MCF 10A (cell line): ENCODE measurements at regions of chr4 and their contacts with region 1.

Region 1: GRCh38 chr4:48017104-48017571 is 566 bp downstream of the NIPAL1 start:
- DNase-seq: peak; percentile 83
- H3K4me3 Mint-ChIP-seq: peak overlapping the region; percentile 86
- H3K27ac Mint-ChIP-seq: peak overlapping the region; percentile 63
- H3K4me1 Mint-ChIP-seq: peaks cover 5% of the 10 kb centered on the region
- H3K27me3 Mint-ChIP-seq: no peaks in the 10 kb centered on the region
- CTCF ChIP-seq: no peak

Region 2: DNA sequence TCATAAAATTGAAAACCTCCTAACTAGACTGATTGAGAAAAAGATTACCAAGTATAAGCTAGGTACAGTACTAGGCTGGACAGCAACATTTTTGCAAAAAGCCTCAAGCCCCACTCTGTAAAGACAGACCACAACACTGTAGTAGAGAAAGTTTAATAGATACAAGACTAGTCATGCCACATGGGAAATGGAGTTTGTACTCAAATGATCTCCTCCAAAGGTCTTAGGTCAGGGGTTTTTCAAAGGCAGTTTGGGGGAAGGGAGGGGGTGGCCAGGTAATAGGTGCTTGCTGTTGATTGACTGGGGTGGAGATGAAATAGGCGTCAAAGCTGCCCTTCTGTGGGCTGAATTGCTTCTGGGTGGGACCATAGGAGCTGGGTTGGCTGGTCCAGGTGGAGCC is 14.9 kb before region 1 on chr4:
- CTCF ChIA-PET with region 1: interaction called, 21 read pairs
- POLR2A ChIA-PET with region 1: no interaction called
- intact Hi-C with region 1: no loop called
- DNase-seq: no peak
- H3K4me3 Mint-ChIP-seq: no peak overlapping the region
- H3K27ac Mint-ChIP-seq: no peak overlapping the region
- H3K4me1 Mint-ChIP-seq: no peaks in the 10 kb centered on the region
- H3K27me3 Mint-ChIP-seq: no peaks in the 10 kb centered on the region
- CTCF ChIP-seq: no peak